GM13976 (cell line): ENCODE measurements at regions of chr17 and their contacts with region 1.

Region 1: GRCh38 chr17:879549-880442 is 97.6 kb downstream of the MRM3 start:
- DNase-seq: peak; percentile 81
- CTCF ChIP-seq: peak; percentile 39

Region 2: DNA sequence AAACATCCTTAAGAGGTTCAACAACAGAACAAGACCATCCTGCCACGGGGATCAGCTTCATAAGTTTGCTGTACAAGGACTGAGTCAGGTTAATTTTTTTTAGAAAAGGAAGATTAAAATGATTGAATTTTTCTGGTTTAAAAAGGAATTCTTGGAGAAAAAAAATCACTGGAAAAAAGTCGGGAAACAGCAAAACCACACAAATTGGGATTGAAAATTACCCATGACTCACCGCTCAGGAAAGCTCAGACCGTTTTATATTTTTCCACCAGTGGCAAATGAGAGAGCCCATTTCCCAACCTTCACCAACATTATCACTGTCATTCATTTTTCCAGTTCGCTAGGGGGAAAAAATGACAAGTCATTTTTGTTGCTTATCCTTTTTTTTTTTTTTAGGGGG is 51.0 kb before region 1 on chr17:
- in situ Hi-C with region 1: loop called (anchors 10 kb)
- DNase-seq: no peak
- CTCF ChIP-seq: no peak

Region 3: GRCh38 chr17:969811-970355 is 90.1 kb after region 1 on chr17:
- in situ Hi-C with region 1: no loop called
- DNase-seq: no peak
- CTCF ChIP-seq: no peak